Mammary epithelial cell (primary cell): ENCODE measurements at regions of chr17 and their contacts with region 1.

Region 1: DNA sequence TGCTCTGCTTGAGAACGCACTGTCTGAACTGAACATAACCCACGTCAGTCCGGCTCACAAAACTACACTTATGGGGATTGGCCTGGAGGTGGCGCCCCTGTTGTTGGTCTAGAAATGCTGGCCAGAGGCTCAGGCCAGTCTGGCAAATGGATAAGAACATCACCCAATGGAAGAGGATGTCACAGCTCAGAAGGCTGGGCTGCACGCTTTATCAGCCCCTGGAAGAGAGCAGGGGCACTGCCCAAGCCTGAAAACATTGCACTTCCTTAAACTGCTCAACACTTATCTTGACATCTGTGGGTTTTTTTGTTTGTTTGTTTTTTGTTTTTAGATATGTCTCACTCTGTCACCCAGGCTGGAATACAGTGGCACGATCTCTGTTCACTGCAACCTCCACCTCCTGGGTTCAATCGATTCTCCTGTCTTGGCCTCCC is 24.8 kb upstream of the BPTF start:
- DNase-seq: peak; percentile 53
- H3K4me3 ChIP-seq: no peak overlapping the region
- H3K27ac ChIP-seq: no peak overlapping the region
- H3K4me1 ChIP-seq: peaks cover 3% of the 10 kb centered on the region
- H3K27me3 ChIP-seq: no peaks in the 10 kb centered on the region
- CTCF ChIP-seq: peak; percentile 73 to 77

Region 2: DNA sequence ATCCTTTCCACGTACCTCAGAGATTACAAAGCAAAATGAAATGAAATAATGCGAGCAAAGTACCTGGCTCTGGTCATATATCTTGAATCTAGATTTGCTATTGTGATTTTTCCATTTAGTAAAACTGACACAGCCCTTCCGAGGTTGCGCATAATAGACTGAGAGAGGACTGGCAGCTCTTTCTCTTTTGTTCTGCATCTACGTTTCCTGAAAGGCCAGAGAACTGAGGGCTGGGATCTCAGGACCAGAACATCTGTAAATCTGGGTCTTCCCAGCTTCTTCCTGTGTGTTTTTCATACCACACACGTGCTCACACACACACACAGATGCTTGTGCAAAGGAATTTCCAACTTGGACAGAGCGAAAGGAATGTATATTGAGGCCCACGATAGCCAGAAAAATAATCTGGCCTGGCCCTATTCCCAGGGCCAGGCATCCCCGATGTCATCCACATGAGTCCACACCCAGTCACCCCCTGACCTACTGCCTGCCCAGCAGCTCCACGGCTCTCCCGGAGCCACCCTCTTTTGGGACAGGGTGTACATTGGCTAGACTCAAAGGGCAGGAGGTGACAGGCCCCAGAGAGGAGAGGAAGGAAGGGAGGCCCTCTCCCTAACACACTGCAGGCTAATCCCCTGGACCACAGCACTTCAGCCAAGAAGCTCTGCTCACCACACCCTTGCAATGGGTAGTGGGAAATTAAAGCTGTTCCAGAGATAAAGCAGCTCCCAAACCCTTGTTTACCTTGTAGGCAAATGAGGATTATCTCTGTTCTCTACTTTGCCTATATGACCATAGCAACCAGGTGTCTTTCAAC is 40.9 kb before region 1 on chr17:
- CTCF ChIA-PET with region 1: no interaction called
- dilution Hi-C with region 1: no loop called
- in situ Hi-C with region 1: no loop called
- intact Hi-C with region 1: no loop called
- DNase-seq: no peak
- H3K4me3 ChIP-seq: no peak overlapping the region
- H3K27ac ChIP-seq: no peak overlapping the region
- H3K4me1 ChIP-seq: no peaks in the 10 kb centered on the region
- H3K27me3 ChIP-seq: no peaks in the 10 kb centered on the region
- CTCF ChIP-seq: no peak

Region 3: DNA sequence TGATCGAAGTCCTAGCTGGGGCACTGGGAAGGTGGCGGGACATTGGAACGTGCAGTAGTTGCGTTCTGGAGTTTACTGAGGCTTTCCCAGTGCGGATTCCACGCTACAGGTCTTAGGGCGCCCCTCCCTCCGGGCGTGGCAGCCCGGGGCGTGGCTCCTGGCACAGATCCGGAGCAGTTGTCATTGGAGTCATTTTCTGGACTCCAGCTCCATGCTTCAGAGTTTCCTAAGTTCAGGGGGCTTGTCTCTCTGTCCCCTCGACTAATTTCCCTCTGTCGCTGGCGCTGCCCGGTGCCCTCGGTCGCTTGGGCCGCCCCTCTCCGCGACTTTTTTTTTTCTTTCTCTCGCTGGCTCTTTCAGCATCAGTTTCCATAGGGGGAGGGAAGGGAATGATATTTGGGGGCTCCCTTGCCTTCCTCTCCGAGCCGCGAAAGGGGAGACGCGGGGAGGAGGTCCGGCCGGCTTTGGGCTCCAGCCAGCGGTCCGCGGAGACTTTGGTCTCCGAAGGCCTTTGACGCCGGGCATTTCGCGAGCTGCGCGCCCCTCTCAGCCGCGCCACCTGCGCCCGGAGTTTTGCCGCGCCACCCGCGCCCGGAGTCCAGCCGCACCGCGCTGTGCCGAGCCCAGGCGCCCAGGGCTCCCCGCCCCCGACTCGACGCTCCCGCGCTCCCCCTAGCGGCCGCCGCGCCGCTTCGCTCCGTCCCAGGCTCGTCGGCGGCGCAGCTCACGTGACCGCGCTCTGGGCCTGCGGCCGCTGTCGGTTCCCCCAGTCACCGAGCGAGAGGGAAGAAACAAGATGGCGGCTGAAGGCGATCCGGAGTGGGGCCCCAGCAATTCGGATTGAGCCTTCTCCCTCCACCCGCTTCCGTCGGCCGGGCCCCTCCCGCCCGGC is 24.5 kb after region 1 on chr17 and contains the start of gene BPTF:
- CTCF ChIA-PET with region 1: no interaction called
- dilution Hi-C with region 1: no loop called
- in situ Hi-C with region 1: no loop called
- intact Hi-C with region 1: loop called (anchors 2 kb)
- DNase-seq: peak; percentile 86
- H3K4me3 ChIP-seq: peak within 1 kb of the TSS; percentile 90
- H3K27ac ChIP-seq: peak within 1 kb of the TSS; percentile 54
- H3K4me1 ChIP-seq: peaks cover 7% of the 10 kb centered on the region
- H3K27me3 ChIP-seq: no peaks in the 10 kb centered on the region
- CTCF ChIP-seq: peak; percentile 71 to 84
- total RNA-seq, gene BPTF: 54.1 to 54.3 TPM

Region 4: DNA sequence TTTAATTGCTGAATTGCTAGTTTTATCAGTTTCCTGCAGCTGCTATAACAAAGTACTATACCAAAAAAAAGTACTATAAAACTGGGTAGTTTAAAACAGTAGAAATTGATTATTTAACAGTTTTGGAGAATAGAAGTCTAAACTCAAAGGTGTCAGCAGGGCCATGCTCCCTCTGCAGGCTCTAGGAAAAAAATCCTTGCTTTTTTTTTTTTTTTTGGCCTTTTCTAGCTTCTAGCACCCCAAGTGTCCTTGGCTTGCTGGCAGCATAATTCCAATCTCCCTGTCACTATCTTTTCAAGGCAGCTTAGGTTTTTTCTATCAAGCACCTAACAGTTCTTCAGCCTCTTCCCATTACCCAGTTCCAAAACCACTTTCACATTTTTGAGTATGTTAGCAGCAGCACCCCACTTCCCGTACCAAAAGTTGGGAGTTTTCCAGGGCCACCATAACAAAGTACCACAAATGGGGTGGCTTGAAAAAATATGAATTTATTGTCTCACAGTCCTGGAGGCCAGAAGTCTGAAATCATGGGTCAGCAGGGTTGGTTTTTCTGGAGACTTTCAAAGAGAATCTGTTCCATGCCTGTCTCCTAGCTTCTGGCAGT is 62.2 kb after region 1 on chr17:
- CTCF ChIA-PET with region 1: interaction called, 3 read pairs
- dilution Hi-C with region 1: no loop called
- in situ Hi-C with region 1: no loop called
- intact Hi-C with region 1: loop called (anchors 2 kb)
- DNase-seq: no peak
- H3K4me3 ChIP-seq: no peak overlapping the region
- H3K27ac ChIP-seq: no peak overlapping the region
- H3K4me1 ChIP-seq: no peaks in the 10 kb centered on the region
- H3K27me3 ChIP-seq: no peaks in the 10 kb centered on the region
- CTCF ChIP-seq: peak in 1 of 2 donors; percentile 31

Region 5: GRCh38 chr17:67891581-67892054 is 91.1 kb after region 1 on chr17:
- CTCF ChIA-PET with region 1: no interaction called
- dilution Hi-C with region 1: no loop called
- in situ Hi-C with region 1: no loop called
- intact Hi-C with region 1: loop called (anchors 2 kb)
- DNase-seq: peak; percentile 5
- H3K4me3 ChIP-seq: no peak overlapping the region
- H3K27ac ChIP-seq: no peak overlapping the region
- H3K4me1 ChIP-seq: no peaks in the 10 kb centered on the region
- H3K27me3 ChIP-seq: no peaks in the 10 kb centered on the region
- CTCF ChIP-seq: peak; percentile 8 to 29

Region 6: DNA sequence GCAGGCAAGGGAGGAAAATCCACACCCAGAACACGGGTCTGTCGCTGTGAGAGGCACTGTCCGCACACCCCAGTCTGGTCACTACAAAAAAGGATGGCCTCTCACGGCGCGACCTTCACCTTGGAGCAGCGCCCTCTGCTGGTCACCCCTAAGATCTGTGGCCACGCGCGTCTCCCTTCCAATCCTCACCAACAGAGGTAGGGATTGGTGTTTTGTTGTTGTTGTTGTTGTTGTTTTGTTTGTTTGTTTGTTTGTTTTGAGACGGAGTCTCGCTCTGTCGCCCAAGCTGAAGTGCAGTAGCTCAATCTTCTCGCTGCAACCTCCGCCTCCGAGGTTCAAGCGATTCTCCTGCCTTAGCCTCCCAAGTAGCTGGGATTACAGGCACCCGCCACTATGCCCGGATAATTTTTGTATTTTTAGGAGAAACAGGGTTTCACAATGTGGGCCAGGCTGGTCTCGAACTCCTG is 210.7 kb after region 1 on chr17:
- CTCF ChIA-PET with region 1: no interaction called
- dilution Hi-C with region 1: no loop called
- in situ Hi-C with region 1: no loop called
- intact Hi-C with region 1: loop called (anchors 1 kb)
- DNase-seq: no peak
- H3K4me3 ChIP-seq: peak overlapping the region in 1 of 3 experiments; percentile 30
- H3K27ac ChIP-seq: no peak overlapping the region
- H3K4me1 ChIP-seq: no peaks in the 10 kb centered on the region
- H3K27me3 ChIP-seq: no peaks in the 10 kb centered on the region
- CTCF ChIP-seq: peak; percentile 66 to 75